ENCODE measurements at regions of chr3 and their contacts with region 1.

Region 1: DNA sequence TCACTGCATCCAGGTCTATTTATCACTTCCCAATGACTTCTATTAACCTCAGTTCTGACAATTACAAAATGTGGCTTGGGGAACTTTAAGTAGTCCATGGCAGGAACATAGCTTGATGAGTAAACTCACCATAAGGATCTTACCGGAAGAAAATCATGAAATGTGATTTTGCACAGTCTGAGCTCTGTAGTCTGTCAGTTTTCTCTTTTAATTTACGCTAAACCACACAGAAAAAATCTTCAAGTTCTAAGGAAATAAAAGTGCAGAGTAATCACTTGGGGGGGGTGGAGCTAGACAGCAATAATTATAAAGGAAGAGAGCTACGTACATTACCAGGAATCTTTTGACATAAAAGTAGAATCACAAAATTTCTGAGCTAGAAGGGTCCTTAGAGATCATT is 9.2 kb downstream of the TBC1D5 start:
- DNase-seq: no peak
- H3K4me3 ChIP-seq: no peak overlapping the region
- H3K27ac ChIP-seq: no peak overlapping the region
- H3K4me1 ChIP-seq: peaks cover 10% of the 10 kb centered on the region
- CTCF ChIP-seq: no peak

Region 2: DNA sequence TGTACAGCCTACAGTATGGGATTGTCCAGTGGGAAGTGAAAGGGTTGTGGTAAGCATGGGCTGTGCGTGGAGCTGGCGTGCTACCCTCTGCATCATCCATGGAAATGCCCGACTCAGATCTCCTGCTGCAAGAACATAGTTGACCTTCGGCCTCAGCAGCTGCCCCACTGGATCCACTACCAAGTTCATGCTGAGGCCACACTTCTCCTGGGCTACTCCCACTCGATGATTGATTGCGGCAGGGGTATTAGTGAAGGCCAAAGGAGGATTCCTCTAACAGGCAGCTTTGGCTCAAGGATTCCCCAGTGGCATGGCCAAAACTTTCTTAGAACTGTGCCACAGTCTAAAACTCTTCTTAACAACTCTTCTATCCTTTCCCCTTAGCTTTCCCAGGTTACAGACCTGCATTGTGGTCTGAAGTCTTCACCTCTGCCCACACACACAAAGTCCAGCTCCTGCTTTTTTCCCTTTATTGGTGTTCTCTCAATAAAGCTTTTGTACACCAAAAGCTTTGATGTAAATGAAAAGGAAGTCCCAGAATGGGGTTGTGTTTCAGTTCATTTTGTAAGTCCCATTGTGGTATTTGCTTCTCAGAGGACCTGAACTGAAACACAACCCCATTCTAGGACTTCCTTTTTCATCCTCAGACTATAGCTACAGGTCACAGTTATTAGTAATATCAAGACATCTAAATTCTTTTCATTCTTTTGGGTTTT is 14.1 kb after region 1 on chr3:
- CTCF ChIA-PET with region 1: no interaction called
- POLR2A ChIA-PET with region 1: interaction called, 11 read pairs
- intact Hi-C with region 1: no loop called
- DNase-seq: peak; percentile 73
- H3K4me3 ChIP-seq: peak overlapping the region; percentile 27
- H3K27ac ChIP-seq: peak overlapping the region; percentile 58
- H3K4me1 ChIP-seq: peaks cover 55% of the 10 kb centered on the region
- CTCF ChIP-seq: no peak

Region 3: GRCh38 chr3:17874632-17875031 is 141.4 kb after region 1 on chr3:
- CTCF ChIA-PET with region 1: no interaction called
- POLR2A ChIA-PET with region 1: no interaction called
- intact Hi-C with region 1: no loop called
- DNase-seq: no peak
- H3K4me3 ChIP-seq: no peak overlapping the region
- H3K27ac ChIP-seq: no peak overlapping the region
- H3K4me1 ChIP-seq: no peaks in the 10 kb centered on the region
- CTCF ChIP-seq: no peak